HEK293 (cell line): ENCODE measurements at regions of chr6 and their contacts with region 1.

Region 1: GRCh38 chr6:110682460-110682853 is 132.8 kb downstream of the CDK19 start:
- H3K4me3 ChIP-seq: no peak overlapping the region
- H3K27ac ChIP-seq: no peak overlapping the region
- H3K4me1 ChIP-seq: no peaks in the 10 kb centered on the region
- CTCF ChIP-seq: peak; percentile 50; the same call in 1 of the 2 replicates

Region 2: DNA sequence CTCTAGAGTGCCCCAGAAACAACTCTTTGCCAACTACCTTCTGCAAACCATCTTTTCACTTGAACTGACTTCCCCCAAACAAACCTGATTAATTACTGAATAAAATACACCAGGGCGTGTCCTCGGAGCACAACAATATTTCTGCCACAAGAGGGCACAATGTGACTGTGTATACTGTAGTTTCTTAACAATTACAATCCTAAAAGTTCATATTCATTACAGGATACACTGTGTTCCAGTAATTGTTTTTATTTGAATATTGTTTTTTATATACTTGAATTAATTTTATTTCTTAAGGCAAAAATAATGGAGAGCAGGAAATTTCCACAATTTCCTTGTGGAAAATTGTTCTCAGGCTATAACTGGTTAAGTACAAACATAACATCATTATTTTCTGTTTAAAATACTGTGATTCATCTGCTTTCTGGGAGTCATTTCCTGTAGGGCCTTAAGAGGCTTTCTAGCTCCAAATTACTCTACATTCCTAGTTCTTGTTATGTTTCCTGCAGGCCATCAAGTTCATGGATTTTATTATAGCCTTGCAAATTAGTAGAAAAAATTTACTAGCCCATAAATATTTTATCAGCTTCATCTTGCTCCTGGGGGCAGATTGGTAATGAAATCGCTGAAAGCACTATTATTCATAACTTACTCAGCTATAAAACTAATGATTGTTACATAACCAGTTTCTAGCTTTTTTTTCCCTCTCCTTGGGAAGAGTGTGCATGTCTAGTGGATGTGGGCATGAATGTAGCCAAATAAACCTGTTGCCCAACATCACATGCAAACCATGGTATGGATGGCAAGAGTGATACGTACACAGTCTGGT is 154.1 kb before region 1 on chr6:
- CTCF ChIA-PET with region 1: interaction called, 13 read pairs
- POLR2A ChIA-PET with region 1: no interaction called
- H3K4me3 ChIP-seq: no peak overlapping the region
- H3K27ac ChIP-seq: no peak overlapping the region
- H3K4me1 ChIP-seq: peaks cover 8% of the 10 kb centered on the region
- CTCF ChIP-seq: peak; percentile 60; the same call in 1 of the 2 replicates

Region 3: DNA sequence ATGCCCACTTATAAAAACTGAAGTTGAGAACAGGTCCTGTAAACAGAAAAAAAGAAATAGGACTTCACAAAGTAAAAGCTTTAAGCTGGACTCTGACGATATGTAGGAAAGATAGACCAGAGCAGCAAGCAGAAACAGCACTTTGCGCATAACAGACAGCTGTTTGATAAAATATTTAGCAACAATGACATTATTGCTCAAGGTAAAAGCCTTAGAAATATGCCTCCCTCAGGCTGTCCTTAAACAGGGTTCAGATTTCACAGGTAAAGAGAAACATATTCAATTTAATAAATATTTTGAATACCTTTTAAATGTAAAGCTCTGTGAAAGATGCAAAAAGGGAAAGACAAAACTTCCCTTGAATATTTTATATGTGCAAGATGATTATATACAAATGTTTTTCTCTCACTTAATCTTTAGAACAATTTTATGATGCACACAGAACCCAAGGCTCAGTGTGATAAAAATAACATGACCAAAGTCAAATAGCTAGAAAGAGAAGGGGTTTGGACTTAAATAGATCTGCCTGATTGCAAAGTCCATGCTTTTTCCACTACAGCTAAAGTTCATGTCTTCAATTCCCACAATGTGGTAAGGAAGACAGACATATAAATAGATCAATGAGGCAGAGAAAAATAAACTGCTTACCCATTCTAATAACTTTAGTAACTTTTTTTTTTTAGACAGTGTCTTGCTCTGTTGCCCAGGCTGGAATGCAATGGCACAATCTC is 11.2 kb before region 1 on chr6:
- CTCF ChIA-PET with region 1: interaction called, 21 read pairs
- POLR2A ChIA-PET with region 1: no interaction called
- H3K4me3 ChIP-seq: no peak overlapping the region
- H3K27ac ChIP-seq: no peak overlapping the region
- H3K4me1 ChIP-seq: peaks cover 5% of the 10 kb centered on the region; the same call in 1 of the 2 replicates
- CTCF ChIP-seq: no peak

Region 4: GRCh38 chr6:110815217-110816109 is 133.0 kb after region 1 on chr6 and contains the start of gene CDK19:
- CTCF ChIA-PET with region 1: interaction called, 13 read pairs
- POLR2A ChIA-PET with region 1: interaction called, 12 read pairs
- H3K4me3 ChIP-seq: peak within 1 kb of the TSS; percentile 95
- H3K27ac ChIP-seq: peak within 1 kb of the TSS; percentile 79
- H3K4me1 ChIP-seq: peaks cover 10% of the 10 kb centered on the region; the same call in 1 of the 2 replicates
- CTCF ChIP-seq: no peak

Region 5: DNA sequence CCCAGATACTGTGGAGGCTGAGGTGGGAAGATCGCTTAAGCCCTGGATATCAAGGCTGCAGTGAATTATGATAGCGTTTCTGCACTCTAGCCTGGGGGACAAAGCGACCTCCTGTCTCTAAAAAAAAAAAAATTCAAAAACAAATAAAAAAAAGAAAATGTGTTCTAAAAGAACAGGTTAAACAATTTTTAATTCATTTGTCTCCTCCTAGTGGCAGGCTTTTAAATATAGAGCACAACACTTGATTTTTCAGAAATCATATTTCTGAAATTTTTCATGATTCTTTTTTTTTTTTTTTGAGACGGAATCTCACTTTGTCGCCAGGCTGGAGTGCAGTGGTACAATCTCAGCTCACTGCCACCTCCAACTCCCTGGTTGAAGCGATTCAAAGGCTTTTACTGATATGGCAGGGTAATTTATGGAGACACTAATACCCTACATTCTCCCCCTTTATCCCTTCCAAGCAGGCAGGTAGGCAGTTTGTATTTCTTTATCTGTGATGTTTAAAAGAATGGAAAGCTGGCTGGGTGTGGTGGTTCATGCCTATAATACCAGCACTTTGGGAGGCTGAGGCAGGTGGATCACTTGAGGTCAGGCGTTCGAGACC is 267.3 kb after region 1 on chr6:
- CTCF ChIA-PET with region 1: interaction called, 114 read pairs
- POLR2A ChIA-PET with region 1: no interaction called
- H3K4me3 ChIP-seq: no peak overlapping the region
- H3K27ac ChIP-seq: no peak overlapping the region
- H3K4me1 ChIP-seq: 0 out of 2 replicates have a peak, but pooled peaks cover 4% of the 10 kb centered on the region
- CTCF ChIP-seq: 0 out of 2 replicates have a peak, but pooled peaks have one; percentile 20

Region 6: GRCh38 chr6:110999634-111000270 is 317.3 kb after region 1 on chr6:
- CTCF ChIA-PET with region 1: interaction called, 18 read pairs
- POLR2A ChIA-PET with region 1: no interaction called
- H3K4me3 ChIP-seq: no peak overlapping the region
- H3K27ac ChIP-seq: no peak overlapping the region
- H3K4me1 ChIP-seq: no peaks in the 10 kb centered on the region
- CTCF ChIP-seq: no peak